ENCODE measurements at regions of chr12 and their contacts with region 1.

Region 1: DNA sequence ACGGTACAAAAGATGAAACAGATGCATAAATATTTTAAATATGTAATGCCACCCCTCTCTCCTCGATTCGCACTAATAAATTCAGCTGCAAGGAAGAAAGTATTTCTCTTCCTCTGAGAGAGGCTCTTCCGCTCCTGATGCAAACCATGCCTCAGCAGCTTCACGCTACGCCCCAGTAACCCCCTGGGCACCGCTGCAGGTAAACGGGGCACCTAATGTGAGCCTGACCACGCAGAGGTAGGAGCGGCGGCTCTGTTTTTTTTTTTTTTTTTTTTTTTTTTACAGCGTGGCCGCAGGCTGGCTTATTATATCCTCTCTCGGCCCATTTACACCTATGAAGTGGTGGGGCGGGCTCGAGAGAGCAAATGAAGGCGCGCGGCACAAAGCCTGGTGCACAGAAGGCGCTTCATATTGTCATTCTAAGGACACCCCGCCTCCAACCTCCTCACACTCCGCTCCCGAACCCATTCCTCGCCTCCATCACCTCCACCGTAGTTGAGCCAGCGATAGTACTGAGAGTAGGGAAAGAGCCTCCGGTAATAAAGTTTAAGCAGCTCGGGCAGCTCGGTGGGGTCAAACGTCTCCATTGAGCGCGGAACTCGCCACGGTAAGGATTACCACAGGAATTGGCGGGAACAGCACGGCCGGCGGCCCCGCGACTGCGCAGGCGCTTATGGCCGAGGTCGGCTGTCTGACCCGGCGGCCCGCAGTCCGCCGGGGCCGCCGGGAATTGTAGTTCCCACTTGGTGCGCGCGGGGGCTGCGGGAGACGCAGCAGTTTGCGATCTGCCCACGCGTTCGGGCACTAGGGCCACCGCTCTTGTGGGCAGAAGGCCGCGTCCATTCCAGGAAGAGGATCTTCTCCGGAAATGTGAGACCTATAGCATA is at the start of gene PRIM1:
- DNase-seq: peak; percentile 77 to 87 (median 80)
- H3K4me3 ChIP-seq: peak within 1 kb of the TSS; percentile 84
- H3K4me3 Mint-ChIP-seq: peak within 1 kb of the TSS; percentile 96 to 100 (median 98)
- H3K27ac ChIP-seq: peak within 1 kb of the TSS; percentile 81
- H3K27ac Mint-ChIP-seq: peak within 1 kb of the TSS; percentile 55 to 98 (median 95)
- H3K4me1 ChIP-seq: no peaks in the 10 kb centered on the region
- H3K4me1 Mint-ChIP-seq: peaks cover 25 to 42% (median 35%) of the 10 kb centered on the region in 3 donors
- H3K27me3 ChIP-seq: no peaks in the 10 kb centered on the region
- H3K27me3 Mint-ChIP-seq: no peaks in the 10 kb centered on the region
- total RNA-seq, gene PRIM1: 79.1 to 80.5 TPM

Region 2: DNA sequence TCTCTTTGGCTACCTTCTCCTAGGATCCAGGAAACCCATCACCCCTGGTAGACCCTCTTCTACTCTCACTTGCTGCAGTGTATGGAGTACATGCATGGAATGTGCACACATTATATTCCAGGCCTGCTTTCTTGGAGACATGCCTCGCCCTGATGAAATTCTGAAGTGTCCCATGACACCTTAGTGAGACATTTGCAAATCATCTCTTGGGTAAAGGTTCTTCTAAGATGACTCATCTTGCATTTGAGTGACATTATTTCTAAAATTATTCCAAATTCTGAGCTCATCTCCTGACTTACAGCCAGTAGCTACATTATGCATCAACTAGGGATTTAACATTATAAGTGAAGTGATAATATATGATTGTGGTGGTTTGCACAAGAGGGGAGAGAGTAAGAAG is 132.5 kb after region 1 on chr12:
- CTCF ChIA-PET with region 1: no interaction called
- POLR2A ChIA-PET with region 1: no interaction called
- DNase-seq: no peak
- H3K4me3 ChIP-seq: no peak overlapping the region
- H3K4me3 Mint-ChIP-seq: no peak overlapping the region
- H3K27ac ChIP-seq: no peak overlapping the region
- H3K27ac Mint-ChIP-seq: no peak overlapping the region
- H3K4me1 ChIP-seq: no peaks in the 10 kb centered on the region
- H3K4me1 Mint-ChIP-seq: no peaks in the 10 kb centered on the region
- H3K27me3 ChIP-seq: no peaks in the 10 kb centered on the region
- H3K27me3 Mint-ChIP-seq: peaks cover 31 to 60% of the 10 kb centered on the region in 2 donors

Region 3: GRCh38 chr12:56987551-56988053 is 235.6 kb after region 1 on chr12:
- CTCF ChIA-PET with region 1: interaction called, 19 read pairs
- POLR2A ChIA-PET with region 1: no interaction called
- DNase-seq: peak; percentile 59 to 78 (median 65)
- H3K4me3 ChIP-seq: no peak overlapping the region
- H3K4me3 Mint-ChIP-seq: peak overlapping the region in 5 of 7 donors; percentile 23 to 79 (median 46)
- H3K27ac ChIP-seq: peak overlapping the region; percentile 14
- H3K27ac Mint-ChIP-seq: peak overlapping the region in 2 of 8 donors; percentile 63 to 78
- H3K4me1 ChIP-seq: peaks cover 9% of the 10 kb centered on the region
- H3K4me1 Mint-ChIP-seq: peaks cover 5 to 8% (median 6%) of the 10 kb centered on the region in 3 donors
- H3K27me3 ChIP-seq: no peaks in the 10 kb centered on the region
- H3K27me3 Mint-ChIP-seq: peaks cover 0 to 3% of the 10 kb centered on the region in 2 donors

Region 4: DNA sequence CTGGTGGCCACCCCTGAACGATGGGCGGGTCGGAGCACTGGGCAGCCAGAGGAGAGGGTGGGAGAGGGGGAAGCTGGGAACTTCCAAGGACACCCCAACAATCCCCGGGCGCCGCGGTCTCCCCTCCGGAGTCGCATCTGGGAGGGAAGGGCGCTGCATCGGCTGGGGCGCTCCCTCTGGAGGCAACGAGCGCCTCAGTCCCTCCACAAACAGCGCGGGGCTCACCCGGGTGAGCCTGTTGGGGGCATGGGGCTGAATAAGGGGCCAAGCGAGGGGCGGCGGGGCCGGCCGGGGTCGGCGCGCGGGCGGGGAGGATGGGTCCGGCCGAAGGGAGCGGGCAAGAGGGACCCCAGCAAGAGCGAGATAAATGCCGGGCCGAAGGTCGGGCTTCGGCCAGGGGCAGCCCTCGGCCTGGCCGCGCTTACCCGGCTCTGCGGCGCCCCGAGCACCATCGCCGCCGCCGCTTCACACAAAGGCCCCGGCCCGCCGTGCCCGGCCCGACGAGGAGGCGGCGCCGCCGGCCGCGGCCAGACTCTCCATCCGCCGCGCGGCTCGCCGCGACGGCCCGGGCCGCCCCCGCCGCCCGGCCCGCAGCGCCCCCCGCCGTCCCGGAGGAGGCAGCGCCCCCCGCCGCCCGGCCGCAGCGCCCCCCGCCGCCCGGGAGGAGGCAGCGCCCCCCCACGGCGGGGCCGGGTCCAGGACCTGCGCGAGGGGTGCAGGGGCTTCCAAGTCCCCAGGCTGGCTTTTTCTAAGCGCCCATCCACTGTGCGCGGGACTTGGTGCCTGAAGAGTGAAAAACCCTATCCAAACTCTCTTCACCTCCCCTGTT is 254.2 kb after region 1 on chr12 and contains the start of gene ZBTB39:
- CTCF ChIA-PET with region 1: interaction called, 10 read pairs
- POLR2A ChIA-PET with region 1: no interaction called
- DNase-seq: peak; percentile 61 to 78 (median 65)
- H3K4me3 ChIP-seq: peak within 1 kb of the TSS; percentile 66
- H3K4me3 Mint-ChIP-seq: peak within 1 kb of the TSS; percentile 88 to 96 (median 92)
- H3K27ac ChIP-seq: peak within 1 kb of the TSS; percentile 55
- H3K27ac Mint-ChIP-seq: peak within 1 kb of the TSS; percentile 84 to 96 (median 90)
- H3K4me1 ChIP-seq: peaks cover 56% of the 10 kb centered on the region
- H3K4me1 Mint-ChIP-seq: peaks cover 47 to 68% (median 63%) of the 10 kb centered on the region in 3 donors
- H3K27me3 ChIP-seq: no peaks in the 10 kb centered on the region
- H3K27me3 Mint-ChIP-seq: no peaks in the 10 kb centered on the region
- total RNA-seq, gene ZBTB39: 9.1 to 9.3 TPM

Region 5: DNA sequence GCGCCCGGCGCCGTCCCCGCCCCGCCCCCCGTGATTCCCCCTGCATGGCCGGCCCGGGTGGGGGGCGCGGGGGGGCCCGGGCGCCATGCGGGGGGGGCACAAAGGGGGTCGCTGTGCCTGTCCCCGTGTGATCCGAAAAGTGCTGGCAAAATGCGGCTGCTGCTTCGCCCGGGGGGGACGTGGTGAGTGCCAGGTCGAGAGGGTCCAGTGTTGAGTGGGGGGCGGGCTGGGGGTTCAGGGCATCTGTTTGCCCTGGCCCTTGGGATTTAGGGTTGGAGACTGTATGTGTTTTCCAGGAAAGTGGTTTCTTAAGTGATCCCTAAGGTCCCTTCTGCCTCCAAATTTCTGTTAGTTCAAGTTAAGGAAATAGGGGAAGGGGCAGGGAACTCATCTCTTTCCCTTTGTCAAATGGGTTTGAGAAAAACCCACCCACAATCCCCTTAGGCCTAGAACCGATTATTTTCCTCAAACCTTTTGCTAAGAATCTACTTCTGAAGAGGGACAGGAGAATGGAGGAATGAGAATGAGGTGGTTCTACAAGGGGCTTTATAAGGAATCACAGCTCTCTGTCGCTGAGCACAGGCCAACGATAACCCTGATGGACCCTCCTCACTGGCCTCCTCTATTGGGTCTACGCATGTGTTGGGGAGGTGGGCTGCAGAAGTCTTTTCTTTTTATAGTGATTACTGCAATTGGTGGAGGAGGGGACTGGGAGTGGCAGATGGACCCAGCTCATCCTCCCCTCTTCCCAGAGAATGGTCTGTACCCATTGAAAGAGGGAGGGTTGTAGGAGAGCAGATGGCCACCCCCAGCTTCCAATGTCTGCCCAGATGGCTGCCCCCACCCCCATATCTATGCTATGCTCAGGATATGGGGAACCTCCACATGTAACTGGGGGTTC is 860.1 kb after region 1 on chr12:
- CTCF ChIA-PET with region 1: no interaction called
- POLR2A ChIA-PET with region 1: interaction called, 10 read pairs
- DNase-seq: no peak
- H3K4me3 ChIP-seq: no peak overlapping the region
- H3K4me3 Mint-ChIP-seq: peak overlapping the region; percentile 67 to 94 (median 78)
- H3K27ac ChIP-seq: no peak overlapping the region
- H3K27ac Mint-ChIP-seq: peak overlapping the region in 2 of 8 donors; percentile 72 to 84
- H3K4me1 ChIP-seq: peaks cover 10% of the 10 kb centered on the region
- H3K4me1 Mint-ChIP-seq: peaks cover 5 to 13% (median 7%) of the 10 kb centered on the region in 3 donors
- H3K27me3 ChIP-seq: peaks cover 4% of the 10 kb centered on the region
- H3K27me3 Mint-ChIP-seq: peaks cover 13 to 34% of the 10 kb centered on the region in 2 donors

Measured in CD8-positive, alpha-beta memory T cell (primary cell).